Activated T-helper 1 cell treated with anti-CD3 and anti-CD28 coated beads, Interleukin-12 subunit alpha, Interleukin-12 subunit beta, Interleukin-2, Interleukin-4 antibody, amounts not matched to agents 30 ng/mL and 10 ng/mL and 1 ng/mL, durations not matched to agents 14 hours and 24 hours and 36 hours (primary cell): ENCODE measurements at regions of chr20 and their contacts with region 1.

Region 1: GRCh38 chr20:47487175-47487917 is 14.3 kb upstream of the NCOA3 start:
- DNase-seq: peak; percentile 70
- H3K4me3 Mint-ChIP-seq: peak overlapping the region; percentile 68
- H3K27ac Mint-ChIP-seq: peak overlapping the region; percentile 98
- H3K4me1 Mint-ChIP-seq: peaks cover 54% of the 10 kb centered on the region
- H3K27me3 Mint-ChIP-seq: no peaks in the 10 kb centered on the region

Region 2: GRCh38 chr20:46994341-46994740 is 493.0 kb before region 1 on chr20:
- intact Hi-C with region 1: loop called (anchors 1 kb)
- DNase-seq: peak; percentile 74
- H3K4me3 Mint-ChIP-seq: peak overlapping the region; percentile 64
- H3K27ac Mint-ChIP-seq: peak overlapping the region; percentile 90
- H3K4me1 Mint-ChIP-seq: peaks cover 80% of the 10 kb centered on the region
- H3K27me3 Mint-ChIP-seq: peaks cover 6% of the 10 kb centered on the region

Region 3: GRCh38 chr20:47379433-47380150 is 107.8 kb before region 1 on chr20:
- intact Hi-C with region 1: loop called (anchors 1 kb)
- DNase-seq: no peak
- H3K4me3 Mint-ChIP-seq: no peak overlapping the region
- H3K27ac Mint-ChIP-seq: peak overlapping the region; percentile 82
- H3K4me1 Mint-ChIP-seq: peaks cover 28% of the 10 kb centered on the region
- H3K27me3 Mint-ChIP-seq: no peaks in the 10 kb centered on the region

Region 4: DNA sequence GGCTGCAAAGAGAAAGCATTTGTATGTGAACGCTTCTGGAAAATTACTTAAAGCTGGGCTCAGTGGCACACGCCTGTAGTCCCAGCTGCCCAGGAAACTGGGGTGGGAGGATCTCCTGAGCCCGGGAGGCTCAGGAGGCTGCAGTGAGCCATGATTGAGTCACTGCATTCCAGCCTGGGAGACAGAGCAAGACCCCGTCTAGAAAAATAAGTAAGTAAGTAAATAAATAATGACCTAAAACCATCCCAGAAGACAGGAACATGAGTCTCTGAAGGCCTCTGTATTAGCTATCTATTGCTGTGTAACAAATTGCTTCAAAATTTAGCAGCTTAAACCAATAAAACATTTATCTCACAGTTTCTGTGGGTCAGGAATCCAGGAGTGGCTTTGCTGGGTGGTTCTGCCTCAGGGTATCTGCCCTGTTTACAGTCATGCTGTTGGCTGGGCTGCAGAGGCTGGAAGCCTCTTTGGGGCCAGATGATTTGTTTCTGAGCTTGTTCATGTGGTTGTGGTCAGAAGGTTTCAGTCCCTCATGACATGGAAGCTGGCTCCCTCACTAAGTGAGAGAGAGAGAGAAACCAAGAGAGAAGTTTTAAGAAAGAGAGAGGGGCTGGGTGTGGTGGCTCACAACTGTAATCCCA is 34.1 kb before region 1 on chr20:
- intact Hi-C with region 1: loop called (anchors 1 kb)
- DNase-seq: peak; percentile 47
- H3K4me3 Mint-ChIP-seq: peak overlapping the region; percentile 15
- H3K27ac Mint-ChIP-seq: peak overlapping the region; percentile 70
- H3K4me1 Mint-ChIP-seq: peaks cover 44% of the 10 kb centered on the region
- H3K27me3 Mint-ChIP-seq: no peaks in the 10 kb centered on the region

Region 5: GRCh38 chr20:47501483-47502270 is 14.3 kb after region 1 on chr20 and contains the start of gene NCOA3:
- intact Hi-C with region 1: loop called (anchors 1 kb)
- DNase-seq: peak; percentile 89
- H3K4me3 Mint-ChIP-seq: peak within 1 kb of the TSS; percentile 92
- H3K27ac Mint-ChIP-seq: peak within 1 kb of the TSS; percentile 99
- H3K4me1 Mint-ChIP-seq: peaks cover 61% of the 10 kb centered on the region
- H3K27me3 Mint-ChIP-seq: no peaks in the 10 kb centered on the region
- total RNA-seq, gene NCOA3: 132 and 133 TPM in 2 replicates

Region 6: GRCh38 chr20:47922252-47922651 is 434.9 kb after region 1 on chr20:
- intact Hi-C with region 1: no loop called
- DNase-seq: no peak
- H3K4me3 Mint-ChIP-seq: no peak overlapping the region
- H3K27ac Mint-ChIP-seq: no peak overlapping the region
- H3K4me1 Mint-ChIP-seq: no peaks in the 10 kb centered on the region
- H3K27me3 Mint-ChIP-seq: peaks cover 9% of the 10 kb centered on the region